Left cardiac atrium (tissue), 4 donors: ENCODE measurements at regions of chr4 and their contacts with region 1.

Region 1: DNA sequence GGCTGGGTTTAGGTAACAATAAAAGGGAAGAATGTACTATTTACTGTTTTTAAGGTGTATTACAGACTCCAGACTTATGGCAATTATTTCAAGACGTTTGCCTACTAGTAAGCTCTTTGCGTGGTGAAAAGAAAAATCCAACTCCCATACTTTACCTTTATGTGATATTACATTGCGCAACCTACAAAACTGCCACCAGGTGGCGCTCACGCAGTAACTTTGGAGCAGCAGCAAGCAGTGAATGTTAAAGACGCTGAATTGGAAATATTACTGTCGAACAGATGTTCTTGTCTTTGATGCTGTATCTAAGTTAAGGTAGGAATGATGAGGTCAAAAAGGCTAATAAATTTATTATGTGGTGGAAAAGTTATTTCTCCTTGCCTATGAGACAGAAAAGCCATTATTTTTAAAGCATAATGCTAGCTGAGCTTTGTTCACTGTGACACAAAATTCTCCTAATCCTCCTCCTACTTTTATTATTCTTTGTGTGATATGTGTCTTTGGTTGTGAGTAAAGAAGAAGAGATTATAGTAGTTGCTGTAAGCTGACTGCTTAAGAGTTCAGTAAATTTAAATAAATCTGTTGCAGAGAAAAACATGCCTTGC is 1099.8 kb upstream of the TENM3 start:
- DNase-seq: peak; percentile 74
- ATAC-seq: peak; percentile 62 to 73

Region 2: GRCh38 chr4:181528570-181529184 is 385.3 kb after region 1 on chr4:
- intact Hi-C with region 1: loop called (anchors 2 to 5 kb)
- DNase-seq: peak; percentile 42
- ATAC-seq: peak; percentile 65 to 67

Region 3: GRCh38 chr4:182925298-182925738 is 1782.0 kb after region 1 on chr4:
- intact Hi-C with region 1: loop called in 1 of 2 experiments (anchors 10 kb)
- DNase-seq: peak; percentile 41
- ATAC-seq: peak; percentile 80 to 88